Dendritic cell treated with granulocyte-macrophage colony-stimulating factor and Interleukin-4, amounts not matched to agents 40 ng/mL and 50 ng/mL, for 4 days (primary cell): ENCODE measurements at regions of chr15 and their contacts with region 1.

Region 1: DNA sequence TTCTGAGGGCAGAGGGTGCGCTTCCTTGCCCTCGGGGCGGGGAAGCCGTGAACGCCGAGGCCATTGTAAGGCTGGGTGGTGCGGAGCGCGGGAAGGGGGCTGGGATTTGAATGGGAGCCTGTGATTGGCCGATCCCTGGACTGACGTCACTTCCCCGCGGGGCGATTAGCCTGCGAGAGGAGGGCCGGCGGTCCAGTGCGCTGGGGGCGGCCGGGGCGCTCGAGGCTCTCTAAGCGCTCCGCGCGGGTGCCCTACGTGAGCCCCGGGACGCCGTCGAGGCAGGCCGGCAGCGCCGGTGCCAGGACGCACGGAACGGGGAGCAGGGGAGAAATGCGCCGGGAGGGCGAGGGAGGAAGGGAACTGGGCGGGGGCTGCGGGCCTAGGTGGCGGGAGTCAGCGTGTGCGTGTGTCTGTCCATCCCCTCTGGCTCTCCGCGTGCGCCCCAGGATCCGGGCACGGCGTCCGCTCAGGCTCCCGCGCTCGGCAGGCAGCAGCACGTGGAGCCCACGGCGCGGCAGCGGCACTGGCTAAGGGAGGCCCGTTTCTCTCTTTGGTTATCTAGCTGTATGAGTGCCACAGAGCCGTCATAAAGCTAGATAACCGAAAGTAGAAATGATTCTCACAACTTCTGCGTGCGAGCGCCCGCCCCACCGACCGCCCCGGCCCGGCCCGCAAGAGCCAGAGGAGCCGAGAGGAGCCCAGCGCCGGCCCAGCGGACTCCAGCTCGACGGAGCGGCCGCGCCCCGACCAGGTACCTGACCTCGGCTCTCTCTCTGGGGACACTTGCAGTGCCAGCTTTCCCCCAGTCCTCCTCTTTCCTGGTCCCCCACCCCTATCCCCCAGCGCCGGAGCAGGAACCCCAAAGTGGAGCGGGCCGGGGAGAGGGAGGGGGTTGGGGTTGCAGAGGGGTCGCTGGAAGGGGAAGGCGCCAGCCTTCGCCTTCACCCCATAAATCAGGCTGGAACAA is 33.1 kb upstream of the POLG start:
- H3K4me3 Mint-ChIP-seq: peak overlapping the region; percentile 60
- H3K27ac Mint-ChIP-seq: no peak overlapping the region
- H3K4me1 Mint-ChIP-seq: peaks cover 72% of the 10 kb centered on the region
- H3K27me3 Mint-ChIP-seq: peaks cover 96% of the 10 kb centered on the region

Region 2: DNA sequence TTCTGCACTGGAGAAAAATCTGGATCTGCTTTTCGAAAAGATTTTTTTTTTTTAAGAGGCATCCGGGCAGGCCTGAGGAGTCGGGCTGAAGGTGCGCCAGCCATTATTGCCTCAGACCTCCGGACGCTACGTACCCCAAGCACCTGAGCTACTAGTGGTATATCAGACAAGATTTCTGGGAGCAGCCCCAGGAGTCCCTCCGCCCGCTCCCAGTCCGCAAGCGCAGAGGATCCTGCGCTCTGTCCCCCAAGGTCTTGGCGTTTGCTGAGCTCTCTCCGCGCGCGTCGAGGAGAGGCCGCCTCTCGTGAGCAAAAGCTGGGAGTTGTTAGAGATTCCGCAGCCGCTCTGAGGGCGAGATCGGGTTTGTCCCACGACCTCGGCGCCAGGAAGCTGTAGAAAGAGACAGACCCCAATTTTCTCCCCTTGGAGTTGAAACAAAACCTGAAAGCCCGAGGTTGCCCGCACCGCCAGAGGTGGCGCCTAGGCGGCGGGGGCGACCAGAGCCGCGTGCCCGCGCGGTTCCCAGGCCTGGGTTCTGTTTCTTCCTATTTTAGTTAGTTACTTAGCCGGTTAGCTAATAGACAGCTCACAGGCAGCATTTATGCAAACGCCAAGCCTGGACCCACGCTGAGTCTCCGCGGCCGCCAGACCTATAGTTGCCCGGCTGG is 39.3 kb after region 1 on chr15:
- intact Hi-C with region 1: loop called (anchors 5 kb)
- H3K4me3 Mint-ChIP-seq: peak overlapping the region; percentile 53
- H3K27ac Mint-ChIP-seq: no peak overlapping the region
- H3K4me1 Mint-ChIP-seq: peaks cover 56% of the 10 kb centered on the region
- H3K27me3 Mint-ChIP-seq: peaks cover 97% of the 10 kb centered on the region

Region 3: DNA sequence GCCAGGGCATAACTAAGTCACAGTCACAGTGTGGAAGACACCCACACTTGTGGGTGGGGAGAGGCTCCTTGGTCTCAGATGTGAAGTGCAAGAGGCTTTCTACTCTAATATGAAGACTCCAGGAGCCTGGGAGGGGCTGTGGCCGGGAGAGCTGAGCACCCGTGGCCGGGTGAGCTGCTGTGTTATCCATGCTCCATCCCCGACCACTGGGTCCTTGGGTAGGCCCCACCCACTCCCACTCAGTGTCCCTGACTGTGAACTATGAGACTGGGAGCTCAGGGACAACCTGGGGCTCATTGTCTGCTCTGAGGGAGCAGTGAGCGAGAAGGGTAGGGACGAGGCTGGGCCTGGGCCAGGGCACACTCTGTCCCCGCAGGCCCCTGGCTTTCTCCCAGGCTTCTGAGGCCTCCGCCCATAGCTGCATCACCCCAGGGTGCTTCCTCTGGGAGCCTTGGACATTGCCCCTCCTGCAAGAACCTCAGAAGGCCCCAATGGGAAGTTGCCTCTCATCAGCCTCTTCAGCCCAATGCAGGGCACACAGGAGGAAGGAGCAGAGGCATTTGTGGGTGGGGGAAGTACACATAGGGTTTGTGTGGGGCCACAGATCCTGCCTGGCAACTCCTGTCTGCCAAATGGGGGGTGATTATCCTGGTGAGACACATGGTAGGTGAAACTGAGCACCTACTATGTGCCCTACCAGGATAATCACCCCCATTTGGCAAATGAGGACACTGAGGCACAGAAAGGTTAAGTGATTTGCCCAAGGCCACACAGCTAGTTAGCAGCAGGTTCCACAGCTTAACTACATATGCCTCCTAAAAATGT is 444.5 kb after region 1 on chr15:
- intact Hi-C with region 1: no loop called
- H3K4me3 Mint-ChIP-seq: peak overlapping the region; percentile 90
- H3K27ac Mint-ChIP-seq: peak overlapping the region; percentile 93
- H3K4me1 Mint-ChIP-seq: peaks cover 78% of the 10 kb centered on the region
- H3K27me3 Mint-ChIP-seq: no peaks in the 10 kb centered on the region